Activated CD4-positive, alpha-beta T cell treated with anti-CD3 and anti-CD28 coated beads for 36 hours (primary cell): ENCODE measurements at regions of chr12 and their contacts with region 1.

Region 1: DNA sequence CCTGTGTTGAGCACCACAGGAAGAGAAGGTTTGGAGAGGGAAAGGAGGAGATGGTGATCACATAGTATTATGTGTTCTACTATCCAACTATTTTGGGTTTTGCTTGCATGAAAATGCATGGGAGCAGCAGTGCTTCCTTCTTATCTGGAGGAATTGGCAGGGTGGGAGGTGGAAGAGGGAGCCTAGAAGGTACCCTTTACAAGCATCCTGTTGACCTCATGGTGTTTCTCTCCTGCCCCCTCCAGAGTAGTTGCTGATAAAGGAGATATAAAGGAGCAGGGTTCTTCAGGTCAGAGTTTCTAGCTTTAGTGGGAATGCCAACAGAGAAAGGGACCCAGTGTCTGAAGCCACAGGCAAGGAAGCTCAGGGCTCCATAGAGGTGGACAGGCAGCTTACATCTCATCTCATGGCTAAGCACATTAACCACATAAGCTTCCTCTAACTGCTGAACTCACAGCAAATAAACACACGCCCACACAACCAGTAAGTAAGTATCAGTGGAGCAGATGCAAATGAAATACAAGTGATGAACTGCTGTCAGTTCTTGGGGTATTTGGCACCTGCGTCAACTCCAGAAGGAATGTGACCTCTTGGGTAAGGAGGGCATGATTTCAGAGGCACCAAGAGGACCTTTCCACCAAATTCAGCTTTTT is 174.2 kb upstream of the SLC38A2 start:
- DNase-seq: peak; percentile 45
- ATAC-seq: peak; percentile 33
- H3K4me3 Mint-ChIP-seq: no peak overlapping the region
- H3K27ac Mint-ChIP-seq: peak overlapping the region; percentile 58
- H3K4me1 Mint-ChIP-seq: peaks cover 58% of the 10 kb centered on the region
- H3K27me3 Mint-ChIP-seq: no peaks in the 10 kb centered on the region

Region 2: DNA sequence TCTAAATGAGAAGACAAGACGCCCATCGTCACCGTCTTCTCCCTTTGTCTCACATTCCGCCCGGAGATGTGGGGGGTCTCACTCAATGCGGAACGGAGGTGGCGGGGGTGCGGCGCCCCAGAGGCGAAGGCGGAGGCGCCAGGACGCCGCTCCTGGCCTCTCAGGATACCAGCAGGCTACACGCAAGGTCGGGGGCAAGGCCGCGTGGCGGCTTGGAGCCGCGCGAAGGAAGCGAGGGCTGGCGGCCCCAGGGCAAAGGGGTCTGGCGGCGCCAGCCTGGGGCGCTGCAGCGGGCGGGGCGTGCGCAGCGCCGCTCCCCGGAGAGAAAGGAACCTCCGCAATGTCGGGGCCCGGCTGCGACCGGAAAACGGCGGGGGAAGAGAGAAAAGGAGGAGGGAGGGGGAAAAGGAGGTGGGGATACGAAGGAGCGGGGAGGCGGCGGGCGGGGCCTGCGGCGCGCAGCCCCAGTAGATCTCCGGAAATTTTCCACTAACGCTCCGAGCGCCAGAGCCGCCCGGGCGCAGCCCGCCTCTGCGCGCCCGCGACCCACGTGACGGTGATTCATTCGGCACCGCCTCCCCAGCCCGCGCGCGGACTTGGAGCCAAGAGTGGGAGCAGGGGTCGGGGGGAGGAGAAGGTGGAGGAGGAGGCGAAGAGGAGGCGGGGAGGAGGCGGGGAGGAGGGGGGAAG is 163.7 kb before region 1 on chr12:
- CTCF ChIA-PET with region 1: no interaction called
- POLR2A ChIA-PET with region 1: no interaction called
- intact Hi-C with region 1: loop called in 1 of 2 experiments (anchors 1 kb)
- DNase-seq: peak; percentile 97
- ATAC-seq: peak; percentile 83
- H3K4me3 Mint-ChIP-seq: peak overlapping the region; percentile 74
- H3K27ac Mint-ChIP-seq: peak overlapping the region; percentile 89
- H3K4me1 Mint-ChIP-seq: peaks cover 39% of the 10 kb centered on the region
- H3K27me3 Mint-ChIP-seq: no peaks in the 10 kb centered on the region

Region 3: GRCh38 chr12:46430340-46430948 is 116.3 kb before region 1 on chr12:
- CTCF ChIA-PET with region 1: no interaction called
- POLR2A ChIA-PET with region 1: no interaction called
- intact Hi-C with region 1: loop called in 1 of 2 experiments (anchors 1 kb)
- DNase-seq: peak; percentile 22
- ATAC-seq: peak; percentile 92
- H3K4me3 Mint-ChIP-seq: peak overlapping the region; percentile 38
- H3K27ac Mint-ChIP-seq: peak overlapping the region; percentile 92
- H3K4me1 Mint-ChIP-seq: peaks cover 24% of the 10 kb centered on the region
- H3K27me3 Mint-ChIP-seq: no peaks in the 10 kb centered on the region

Region 4: GRCh38 chr12:46459861-46460545 is 86.8 kb before region 1 on chr12:
- CTCF ChIA-PET with region 1: interaction called, 4 read pairs
- POLR2A ChIA-PET with region 1: interaction called, 5 read pairs
- intact Hi-C with region 1: loop called (anchors 1 to 2 kb)
- DNase-seq: peak; percentile 17
- ATAC-seq: no peak
- H3K4me3 Mint-ChIP-seq: peak overlapping the region; percentile 46
- H3K27ac Mint-ChIP-seq: peak overlapping the region; percentile 88
- H3K4me1 Mint-ChIP-seq: peaks cover 56% of the 10 kb centered on the region
- H3K27me3 Mint-ChIP-seq: no peaks in the 10 kb centered on the region

Region 5: DNA sequence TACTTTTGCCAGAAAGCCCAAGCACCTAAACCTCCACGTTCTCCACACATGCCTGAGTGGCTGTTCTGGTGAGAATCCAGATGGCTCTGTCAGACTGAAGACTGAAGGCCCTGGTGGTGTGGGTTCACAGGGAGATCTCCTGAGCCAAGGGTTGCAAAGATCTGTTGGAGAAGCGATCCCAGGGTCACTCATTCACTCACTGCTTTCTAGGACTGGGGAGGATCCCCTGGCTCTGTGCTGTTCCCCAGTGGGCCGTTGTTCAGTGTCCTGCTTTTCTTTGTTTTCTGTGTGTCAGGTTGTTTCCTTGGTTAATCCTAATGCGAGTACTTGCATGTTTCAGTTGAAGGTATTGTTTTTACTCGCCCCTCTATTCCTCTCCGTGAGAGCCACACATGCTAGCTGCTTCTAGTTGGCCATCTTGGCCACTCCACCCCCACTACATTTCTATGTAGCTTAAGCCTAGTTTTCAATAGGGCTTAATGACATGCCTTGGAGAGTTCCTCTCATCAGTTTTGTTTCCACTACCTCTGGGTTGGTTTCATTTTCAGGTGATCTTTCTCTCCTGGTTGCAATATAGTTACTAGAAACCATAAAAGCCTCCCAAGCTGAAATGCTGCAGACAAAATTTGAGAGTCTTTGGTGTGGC is 29.7 kb before region 1 on chr12:
- CTCF ChIA-PET with region 1: interaction called, 4 read pairs
- POLR2A ChIA-PET with region 1: no interaction called
- intact Hi-C with region 1: loop called in 1 of 2 experiments (anchors 1 kb)
- DNase-seq: peak; percentile 49
- ATAC-seq: peak; percentile 93
- H3K4me3 Mint-ChIP-seq: peak overlapping the region; percentile 3
- H3K27ac Mint-ChIP-seq: peak overlapping the region; percentile 90
- H3K4me1 Mint-ChIP-seq: peaks cover 61% of the 10 kb centered on the region
- H3K27me3 Mint-ChIP-seq: no peaks in the 10 kb centered on the region

Region 6: DNA sequence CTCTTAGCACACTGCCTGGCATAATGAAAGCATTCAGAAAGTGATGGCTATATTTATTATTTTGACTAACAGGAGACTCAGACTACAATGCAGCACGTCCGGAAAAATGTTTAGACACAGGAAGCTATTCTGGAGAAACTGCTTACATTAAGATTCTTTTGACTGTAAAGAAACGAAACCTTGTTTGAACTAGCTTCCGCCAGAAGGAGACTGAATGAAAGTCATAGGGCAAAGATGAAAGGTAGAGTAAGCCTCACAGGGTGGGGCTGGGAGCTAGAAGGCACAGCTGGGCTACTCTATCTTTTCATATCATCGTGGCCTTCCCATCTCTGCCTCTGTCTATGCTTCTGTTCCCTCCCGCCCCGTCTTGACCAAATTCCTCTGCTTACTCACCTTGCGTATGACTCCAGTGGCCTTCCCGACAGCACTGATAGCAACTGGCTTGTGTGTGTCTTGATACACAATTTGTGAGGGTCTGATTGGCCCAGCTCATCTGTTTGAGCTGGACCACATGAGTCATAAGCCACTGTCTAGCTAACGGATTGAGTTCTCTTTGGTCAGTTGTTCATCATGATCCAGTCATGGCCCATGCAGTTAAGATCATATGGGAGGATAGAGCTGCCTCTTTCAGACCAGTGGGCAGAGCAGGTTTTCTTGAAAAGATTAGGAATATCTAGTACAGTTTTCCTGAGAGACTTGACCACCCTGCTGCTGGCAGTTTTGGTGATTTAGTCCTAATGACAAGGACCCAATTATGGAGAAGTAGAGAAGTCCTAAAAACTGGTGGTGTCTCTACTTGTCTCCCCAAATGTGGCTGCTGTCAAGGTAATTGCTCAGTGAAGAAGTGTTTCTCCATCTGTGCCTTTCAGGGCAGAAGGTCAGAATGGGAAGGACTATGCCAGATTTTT is 22.6 kb before region 1 on chr12:
- CTCF ChIA-PET with region 1: interaction called, 4 read pairs
- POLR2A ChIA-PET with region 1: interaction called, 7 read pairs
- intact Hi-C with region 1: loop called (anchors 1 to 2 kb)
- DNase-seq: peak; percentile 66
- ATAC-seq: peak; percentile 89
- H3K4me3 Mint-ChIP-seq: peak overlapping the region; percentile 57
- H3K27ac Mint-ChIP-seq: peak overlapping the region; percentile 91
- H3K4me1 Mint-ChIP-seq: peaks cover 43% of the 10 kb centered on the region
- H3K27me3 Mint-ChIP-seq: no peaks in the 10 kb centered on the region

Region 7: DNA sequence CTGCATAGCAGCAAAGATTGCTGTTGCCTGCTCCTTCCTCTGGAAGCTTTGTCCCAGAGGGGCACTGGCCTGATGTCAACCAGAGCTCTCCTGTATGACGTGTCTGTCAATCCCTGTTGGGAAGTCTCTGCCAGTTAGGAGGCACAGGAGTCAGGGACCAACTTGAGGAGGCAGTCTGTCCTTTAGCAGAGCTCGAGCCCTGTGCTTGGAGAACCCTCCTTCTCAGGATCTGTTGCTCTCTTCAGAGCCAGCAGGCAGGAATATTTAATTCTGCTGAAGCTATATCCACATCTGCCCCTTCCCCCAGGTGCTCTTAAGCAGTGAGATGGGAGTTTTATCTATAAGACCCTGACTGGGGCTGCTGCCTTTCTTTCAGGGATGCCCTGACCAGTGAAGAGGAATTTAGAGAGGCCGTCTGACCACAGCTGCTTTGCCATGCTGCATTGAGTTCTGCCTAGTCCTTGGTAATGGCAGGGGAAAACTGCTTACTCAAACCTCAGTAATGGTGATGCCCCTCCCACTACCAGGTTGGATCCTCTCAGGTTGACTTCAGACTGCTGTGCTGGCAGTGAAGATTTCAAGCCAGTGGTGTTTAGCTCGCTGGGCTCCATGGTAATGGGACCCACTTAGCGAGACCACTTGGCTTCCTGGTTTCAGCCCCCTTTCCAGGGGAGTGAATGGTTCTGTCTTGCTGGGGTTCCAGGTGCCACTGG is 44.4 kb after region 1 on chr12:
- CTCF ChIA-PET with region 1: no interaction called
- POLR2A ChIA-PET with region 1: no interaction called
- intact Hi-C with region 1: no loop called
- DNase-seq: no peak
- ATAC-seq: no peak
- H3K4me3 Mint-ChIP-seq: no peak overlapping the region
- H3K27ac Mint-ChIP-seq: no peak overlapping the region
- H3K4me1 Mint-ChIP-seq: peaks cover 19% of the 10 kb centered on the region
- H3K27me3 Mint-ChIP-seq: no peaks in the 10 kb centered on the region